ENCODE measurements at regions of chr15 and their contacts with region 1.

Region 1: GRCh38 chr15:97903971-97904572 is 56.4 kb upstream of the ARRDC4 start:
- DNase-seq: peak; percentile 58 to 77 (median 68)
- ATAC-seq: peak; percentile 99
- H3K4me3 ChIP-seq: no peak overlapping the region
- H3K27ac ChIP-seq: no peak overlapping the region
- H3K4me1 ChIP-seq: peaks cover 0 to 4% of the 10 kb centered on the region in 2 experiments; a peak in 1 of 5 replicates
- H3K27me3 ChIP-seq: peaks cover 19 to 25% of the 10 kb centered on the region in 2 experiments; a peak in 4 of 5 replicates
- CTCF ChIP-seq: peak; percentile 79 to 92 (median 88)
- EP300 ChIP-seq: no peak
- POLR2A ChIP-seq: no peak
- RAD21 ChIP-seq: peak; percentile 76 to 91

Region 2: DNA sequence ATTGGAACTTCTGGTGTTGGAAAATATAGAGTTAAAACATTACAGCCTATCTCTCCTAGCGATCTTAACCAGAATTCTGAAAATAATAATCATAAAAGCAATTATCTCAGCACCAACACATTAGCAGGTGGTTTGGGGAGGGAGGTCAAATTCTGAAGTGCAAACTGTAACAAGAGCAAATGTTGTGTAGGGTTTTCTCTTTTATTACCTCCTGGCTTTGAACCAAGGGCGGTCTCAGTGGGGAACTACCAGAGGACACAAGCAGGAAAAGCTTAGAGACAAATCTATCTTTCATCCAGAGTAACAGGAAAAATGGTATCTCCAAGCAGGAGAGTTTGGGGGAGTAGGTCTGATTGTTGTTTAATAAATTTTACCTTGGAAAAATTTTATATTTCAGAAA is 51.0 kb after region 1 on chr15:
- CTCF ChIA-PET with region 1: no interaction called
- POLR2A ChIA-PET with region 1: no interaction called
- in situ Hi-C with region 1: no loop called
- intact Hi-C with region 1: no loop called
- DNase-seq: no peak
- ATAC-seq: no peak
- H3K4me3 ChIP-seq: no peak overlapping the region
- H3K27ac ChIP-seq: no peak overlapping the region
- H3K4me1 ChIP-seq: no peaks in the 10 kb centered on the region; a peak in 3 of 5 replicates
- H3K27me3 ChIP-seq: peaks cover 5 to 9% of the 10 kb centered on the region in 2 experiments; a peak in 4 of 5 replicates
- CTCF ChIP-seq: no peak
- EP300 ChIP-seq: no peak
- POLR2A ChIP-seq: no peak
- RAD21 ChIP-seq: no peak

Region 3: GRCh38 chr15:98085003-98085639 is 181.0 kb after region 1 on chr15:
- CTCF ChIA-PET with region 1: interaction called, 17 read pairs
- POLR2A ChIA-PET with region 1: no interaction called
- in situ Hi-C with region 1: loop called (anchors 10 kb)
- intact Hi-C with region 1: loop called (anchors 1 kb)
- DNase-seq: peak in 2 of 4 experiments; percentile 40 to 72
- ATAC-seq: 0 out of 3 replicates have a peak, but pooled peaks have one; percentile 48
- H3K4me3 ChIP-seq: no peak overlapping the region
- H3K27ac ChIP-seq: no peak overlapping the region
- H3K4me1 ChIP-seq: no peaks in the 10 kb centered on the region; a peak in 1 of 5 replicates
- H3K27me3 ChIP-seq: no peaks in the 10 kb centered on the region
- CTCF ChIP-seq: peak; percentile 37 to 75 (median 54); a peak in 5 of 6 replicates
- EP300 ChIP-seq: no peak
- POLR2A ChIP-seq: no peak
- RAD21 ChIP-seq: peak; percentile 74 to 86

Region 4: DNA sequence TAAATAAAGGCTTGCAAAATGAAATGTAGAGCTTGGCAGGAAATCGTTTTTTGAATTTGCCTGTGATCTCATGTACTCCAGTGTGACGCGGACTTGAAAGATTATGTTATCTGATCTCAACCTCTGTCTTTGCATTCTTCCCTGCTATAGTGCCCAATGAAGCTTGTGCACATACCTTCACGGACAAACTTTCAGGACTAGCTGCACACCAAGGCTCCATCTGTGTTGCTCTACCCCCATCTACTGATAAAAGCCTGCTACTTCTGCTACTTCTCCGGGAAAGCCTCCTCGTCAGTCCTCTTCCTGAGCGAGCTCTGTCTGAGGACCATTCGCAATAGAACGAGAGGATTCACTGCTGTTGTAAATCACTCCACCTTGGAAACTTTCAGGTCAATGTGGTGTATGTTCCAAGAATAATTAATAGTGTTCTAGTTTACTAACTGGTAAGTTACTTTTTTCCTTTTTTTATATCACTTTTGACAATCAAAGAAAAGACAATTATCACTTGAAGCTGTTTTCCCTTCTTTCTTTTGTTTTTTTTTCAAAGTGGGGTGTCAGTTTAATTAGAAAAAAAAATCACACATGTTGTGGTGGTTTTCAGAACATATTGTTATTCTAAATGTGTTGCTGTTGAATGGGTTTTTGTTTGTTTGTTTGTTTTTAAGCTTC is 274.0 kb after region 1 on chr15:
- CTCF ChIA-PET with region 1: interaction called, 9 read pairs
- POLR2A ChIA-PET with region 1: no interaction called
- in situ Hi-C with region 1: loop called (anchors 10 kb)
- intact Hi-C with region 1: loop called (anchors 1 kb)
- DNase-seq: peak; percentile 44 to 69 (median 62)
- ATAC-seq: peak; percentile 95
- H3K4me3 ChIP-seq: no peak overlapping the region
- H3K27ac ChIP-seq: no peak overlapping the region
- H3K4me1 ChIP-seq: no peaks in the 10 kb centered on the region
- H3K27me3 ChIP-seq: no peaks in the 10 kb centered on the region
- CTCF ChIP-seq: peak; percentile 75 to 78 (median 75)
- EP300 ChIP-seq: no peak
- POLR2A ChIP-seq: no peak
- RAD21 ChIP-seq: peak; percentile 85 to 90

Region 5: DNA sequence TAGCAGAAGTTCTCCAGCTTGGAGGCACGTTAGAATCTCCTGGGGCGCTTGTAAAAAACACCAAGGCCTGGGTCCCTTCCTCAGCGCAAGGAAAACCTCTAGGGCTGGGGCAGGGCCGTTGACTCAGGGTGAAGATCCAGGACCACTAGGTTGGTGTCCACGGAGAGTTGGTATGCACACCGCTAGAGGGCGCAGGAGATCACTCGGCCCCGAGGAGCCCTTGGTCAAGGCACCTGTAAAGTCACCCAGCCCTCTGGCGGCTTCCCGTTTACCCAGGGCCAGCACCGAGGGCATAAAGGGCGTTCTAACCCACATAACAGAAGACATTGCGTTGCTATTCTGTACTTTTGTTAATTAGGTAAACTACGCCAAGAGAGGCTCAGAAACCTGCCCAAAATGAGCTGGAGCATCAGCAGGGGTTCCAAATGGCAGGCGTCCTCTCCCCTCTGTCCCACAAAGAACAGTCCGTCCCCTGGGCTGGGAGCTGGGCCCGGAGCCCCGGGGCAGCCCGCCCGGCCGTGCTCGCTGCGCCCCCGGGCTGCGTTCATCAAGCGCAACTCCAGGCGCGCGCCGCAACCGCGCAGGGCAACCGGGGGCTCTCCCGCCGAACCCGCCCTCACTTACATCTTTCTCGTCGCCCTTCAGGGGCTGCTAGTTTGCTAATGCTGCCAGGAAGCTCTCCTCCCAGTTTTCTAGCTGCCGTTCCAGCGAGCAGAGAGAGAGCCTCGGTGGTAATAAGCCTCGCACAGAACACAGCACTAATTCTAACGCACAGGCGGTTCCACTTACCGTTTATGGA is 388.6 kb after region 1 on chr15:
- CTCF ChIA-PET with region 1: no interaction called
- POLR2A ChIA-PET with region 1: no interaction called
- in situ Hi-C with region 1: loop called (anchors 25 kb)
- intact Hi-C with region 1: loop called (anchors 1 kb)
- DNase-seq: peak; percentile 61 to 83 (median 76)
- ATAC-seq: peak; percentile 99
- H3K4me3 ChIP-seq: no peak overlapping the region
- H3K27ac ChIP-seq: no peak overlapping the region
- H3K4me1 ChIP-seq: peaks cover 0 to 5% of the 10 kb centered on the region in 2 experiments; a peak in 1 of 5 replicates
- H3K27me3 ChIP-seq: peaks cover 11 to 25% of the 10 kb centered on the region in 2 experiments; a peak in 3 of 5 replicates
- CTCF ChIP-seq: peak; percentile 68 to 84 (median 81)
- EP300 ChIP-seq: no peak
- POLR2A ChIP-seq: no peak
- RAD21 ChIP-seq: peak in 1 of 2 experiments; percentile 29; a peak in 1 of 4 replicates

Region 6: DNA sequence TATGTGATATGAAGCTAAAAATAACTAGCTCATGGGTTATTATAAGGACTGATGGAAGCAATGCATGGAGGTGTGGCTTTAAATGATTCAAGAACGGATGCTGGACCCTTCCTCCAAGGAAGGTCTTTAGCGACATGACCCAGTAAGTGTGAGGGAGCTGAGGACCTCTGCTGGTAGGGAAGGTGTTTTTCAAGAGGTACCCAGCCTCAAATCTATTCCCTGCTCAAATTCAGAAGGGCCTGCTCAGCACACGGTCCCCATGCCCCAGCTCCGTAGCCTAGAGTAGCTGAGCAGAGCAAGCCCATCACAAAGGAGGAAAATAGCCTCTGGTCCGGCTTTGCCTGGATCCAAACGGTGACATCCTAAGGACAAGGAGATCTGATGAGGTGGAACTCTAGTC is 478.1 kb after region 1 on chr15:
- CTCF ChIA-PET with region 1: no interaction called
- POLR2A ChIA-PET with region 1: no interaction called
- in situ Hi-C with region 1: no loop called
- intact Hi-C with region 1: no loop called
- DNase-seq: peak in 1 of 4 experiments; percentile 5
- ATAC-seq: 0 out of 3 replicates have a peak, but pooled peaks have one; percentile 31
- H3K4me3 ChIP-seq: no peak overlapping the region
- H3K27ac ChIP-seq: no peak overlapping the region
- H3K4me1 ChIP-seq: no peaks in the 10 kb centered on the region
- H3K27me3 ChIP-seq: peaks cover 0 to 11% of the 10 kb centered on the region in 2 experiments; a peak in 2 of 5 replicates
- CTCF ChIP-seq: peak in 2 of 3 experiments; percentile 33 to 36; a peak in 2 of 6 replicates
- EP300 ChIP-seq: no peak
- POLR2A ChIP-seq: no peak
- RAD21 ChIP-seq: no peak